Activated CD4-positive, alpha-beta memory T cell treated with anti-CD3 and anti-CD28 coated beads for 36 hours (primary cell): ENCODE measurements at regions of chr14 and their contacts with region 1.

Region 1: GRCh38 chr14:88792572-88793258 is at the start of gene EML5:
- DNase-seq: peak; percentile 87
- H3K4me3 Mint-ChIP-seq: peak within 1 kb of the TSS; percentile 89
- H3K27ac Mint-ChIP-seq: peak within 1 kb of the TSS; percentile 74
- H3K4me1 Mint-ChIP-seq: peaks cover 25% of the 10 kb centered on the region
- H3K27me3 Mint-ChIP-seq: peaks cover 3% of the 10 kb centered on the region
- total RNA-seq, gene EML5: 5.7 to 6.2 TPM

Region 2: DNA sequence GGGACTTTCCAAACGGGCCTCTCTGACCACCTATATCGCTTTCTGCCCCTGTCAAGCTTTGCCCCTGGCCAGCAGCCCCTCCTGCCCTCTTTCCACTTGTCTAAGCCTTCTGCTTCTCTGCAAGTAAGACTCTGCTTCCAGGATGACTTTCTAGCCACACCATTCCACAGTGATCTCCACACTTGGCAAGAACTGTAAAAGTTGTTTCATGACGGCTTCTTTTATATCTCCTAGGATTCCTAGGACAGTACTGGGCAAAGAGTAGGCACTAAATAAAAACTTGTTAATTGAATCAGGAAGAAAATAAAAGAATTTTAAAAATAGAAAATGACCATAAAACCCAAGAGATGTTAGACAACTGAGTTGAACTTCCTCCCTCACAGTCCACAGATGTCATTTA is 236.1 kb before region 1 on chr14:
- CTCF ChIA-PET with region 1: no interaction called
- POLR2A ChIA-PET with region 1: no interaction called
- intact Hi-C with region 1: loop called (anchors 2 kb)
- DNase-seq: no peak
- H3K4me3 Mint-ChIP-seq: no peak overlapping the region
- H3K27ac Mint-ChIP-seq: no peak overlapping the region
- H3K4me1 Mint-ChIP-seq: peaks cover 31% of the 10 kb centered on the region
- H3K27me3 Mint-ChIP-seq: peaks cover 42% of the 10 kb centered on the region

Region 3: DNA sequence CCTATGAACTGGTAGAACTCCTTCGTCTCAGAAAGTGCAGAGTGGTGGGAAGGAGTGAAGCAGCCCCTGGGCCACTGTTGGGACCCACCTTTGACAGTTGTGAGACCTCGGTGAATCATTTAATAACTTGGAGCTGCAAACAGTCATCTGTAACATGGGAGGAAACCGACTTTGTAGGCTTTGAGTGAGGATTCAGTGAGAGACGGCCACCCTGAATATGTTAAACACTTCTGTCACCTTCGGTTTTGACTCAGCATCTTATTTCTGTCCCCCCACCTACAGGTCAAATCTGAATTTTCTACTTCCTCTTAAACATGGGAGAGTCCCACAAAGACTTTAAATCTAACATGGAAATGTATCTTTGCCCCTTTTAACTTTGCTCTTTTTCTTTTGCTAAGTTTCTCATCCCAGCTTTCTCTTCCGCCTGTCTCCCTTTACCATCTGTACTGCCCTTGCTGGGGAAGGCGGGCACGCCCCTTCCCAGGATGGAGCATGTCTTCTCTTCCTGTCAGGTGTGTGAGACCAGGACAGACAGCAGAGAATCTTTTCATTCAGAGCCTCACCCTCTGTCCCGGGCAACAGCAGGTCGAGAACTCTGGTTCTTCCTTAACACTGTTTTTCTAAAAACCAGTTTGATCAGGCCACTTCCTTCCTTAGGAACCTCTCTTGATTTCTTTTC is 192.8 kb before region 1 on chr14:
- CTCF ChIA-PET with region 1: no interaction called
- POLR2A ChIA-PET with region 1: no interaction called
- intact Hi-C with region 1: loop called (anchors 2 kb)
- DNase-seq: peak; percentile 65
- H3K4me3 Mint-ChIP-seq: peak overlapping the region; percentile 25
- H3K27ac Mint-ChIP-seq: peak overlapping the region; percentile 84
- H3K4me1 Mint-ChIP-seq: peaks cover 40% of the 10 kb centered on the region
- H3K27me3 Mint-ChIP-seq: no peaks in the 10 kb centered on the region

Region 4: DNA sequence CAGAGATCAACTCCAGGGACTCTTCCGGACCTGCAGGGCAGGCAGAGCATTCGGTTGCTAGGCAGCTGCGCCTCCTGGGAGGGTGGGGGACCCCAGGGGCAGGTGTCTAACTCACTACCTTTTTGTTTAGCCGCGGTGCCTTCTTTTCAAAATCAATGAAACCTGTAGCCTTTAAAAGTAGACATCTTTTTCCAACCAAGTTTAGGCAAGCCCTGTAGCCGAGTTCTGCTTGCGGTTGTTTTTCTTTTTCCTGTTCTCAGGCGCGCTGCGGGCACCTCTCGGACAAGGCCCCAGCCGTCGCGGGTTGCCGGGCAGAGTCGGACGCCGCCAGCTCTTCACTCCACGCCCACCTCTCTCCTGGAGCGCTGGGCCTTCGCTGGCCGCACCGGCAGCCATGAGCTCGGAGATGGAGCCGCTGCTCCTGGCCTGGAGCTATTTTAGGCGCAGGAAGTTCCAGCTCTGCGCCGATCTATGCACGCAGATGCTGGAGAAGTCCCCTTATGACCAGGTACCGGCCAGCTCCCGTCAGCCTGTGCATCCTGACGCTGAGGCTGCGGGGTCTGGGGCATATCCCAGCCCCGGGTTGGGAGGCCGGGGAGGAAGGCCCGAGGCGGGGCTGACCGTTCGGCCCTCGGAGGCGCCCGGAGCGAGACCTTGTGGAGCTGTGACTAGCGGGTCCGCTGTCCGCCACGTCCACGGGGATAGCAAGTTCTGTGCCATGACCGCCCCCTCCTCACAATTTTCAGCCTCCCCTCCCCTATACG is 31.8 kb after region 1 on chr14 and contains the start of gene TTC8:
- CTCF ChIA-PET with region 1: interaction called, 13 read pairs
- POLR2A ChIA-PET with region 1: interaction called, 12 read pairs
- intact Hi-C with region 1: loop called (anchors 1 kb)
- DNase-seq: peak; percentile 87
- H3K4me3 Mint-ChIP-seq: peak within 1 kb of the TSS; percentile 94
- H3K27ac Mint-ChIP-seq: peak within 1 kb of the TSS; percentile 94
- H3K4me1 Mint-ChIP-seq: peaks cover 10% of the 10 kb centered on the region
- H3K27me3 Mint-ChIP-seq: peaks cover 3% of the 10 kb centered on the region
- total RNA-seq, gene TTC8: 3.3 to 4.9 TPM

Region 5: GRCh38 chr14:89017417-89017816 is 224.7 kb after region 1 on chr14:
- CTCF ChIA-PET with region 1: no interaction called
- POLR2A ChIA-PET with region 1: no interaction called
- intact Hi-C with region 1: no loop called
- DNase-seq: no peak
- H3K4me3 Mint-ChIP-seq: no peak overlapping the region
- H3K27ac Mint-ChIP-seq: no peak overlapping the region
- H3K4me1 Mint-ChIP-seq: no peaks in the 10 kb centered on the region
- H3K27me3 Mint-ChIP-seq: peaks cover 19% of the 10 kb centered on the region